Sigmoid colon (tissue), 7 donors: ENCODE measurements at regions of chr12 and their contacts with region 1.

Region 1: GRCh38 chr12:66087365-66087943 is 43.1 kb downstream of the LLPH start:
- DNase-seq: peak; percentile 71
- H3K4me3 ChIP-seq: no peak overlapping the region
- H3K27ac ChIP-seq: no peak overlapping the region
- H3K4me1 ChIP-seq: no peaks in the 10 kb centered on the region
- H3K27me3 ChIP-seq: no peaks in the 10 kb centered on the region
- CTCF ChIP-seq: peak in 3 of 4 experiments; percentile 46 to 66 (median 52)
- EP300 ChIP-seq: no peak
- POLR2A ChIP-seq: no peak

Region 2: DNA sequence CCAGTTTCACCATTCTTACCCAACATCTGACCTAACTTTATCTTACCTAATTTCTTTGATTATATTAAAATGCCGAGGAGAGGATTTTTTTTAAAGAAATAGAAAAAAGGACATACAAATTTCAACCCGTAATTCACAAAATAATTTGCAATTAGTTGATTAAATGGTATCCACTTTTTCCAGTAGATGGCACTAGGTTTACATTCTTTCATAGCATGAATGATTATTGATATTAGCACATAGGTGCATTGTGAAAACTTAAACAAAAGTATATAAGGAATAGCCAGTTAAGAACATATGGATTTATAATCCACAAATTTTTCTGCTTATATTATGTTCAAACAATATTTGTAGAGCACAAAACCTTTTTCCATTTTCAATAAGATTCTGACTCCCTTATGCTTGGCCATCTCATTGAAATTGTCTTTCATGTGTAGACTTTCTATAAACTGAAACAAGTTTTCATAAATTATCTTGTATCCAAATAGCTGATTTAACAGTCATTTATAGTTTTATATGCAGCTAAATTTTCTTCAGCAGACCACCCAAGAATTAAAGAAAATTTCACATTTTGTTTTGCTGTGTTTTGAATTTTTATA is 773.6 kb before region 1 on chr12:
- intact Hi-C with region 1: loop called (anchors 5 kb)
- DNase-seq: no peak
- H3K4me3 ChIP-seq: no peak overlapping the region
- H3K27ac ChIP-seq: no peak overlapping the region
- H3K4me1 ChIP-seq: peaks cover 0 to 25% (median 12%) of the 10 kb centered on the region in 4 donors
- H3K27me3 ChIP-seq: no peaks in the 10 kb centered on the region
- CTCF ChIP-seq: no peak
- EP300 ChIP-seq: no peak
- POLR2A ChIP-seq: no peak

Region 3: DNA sequence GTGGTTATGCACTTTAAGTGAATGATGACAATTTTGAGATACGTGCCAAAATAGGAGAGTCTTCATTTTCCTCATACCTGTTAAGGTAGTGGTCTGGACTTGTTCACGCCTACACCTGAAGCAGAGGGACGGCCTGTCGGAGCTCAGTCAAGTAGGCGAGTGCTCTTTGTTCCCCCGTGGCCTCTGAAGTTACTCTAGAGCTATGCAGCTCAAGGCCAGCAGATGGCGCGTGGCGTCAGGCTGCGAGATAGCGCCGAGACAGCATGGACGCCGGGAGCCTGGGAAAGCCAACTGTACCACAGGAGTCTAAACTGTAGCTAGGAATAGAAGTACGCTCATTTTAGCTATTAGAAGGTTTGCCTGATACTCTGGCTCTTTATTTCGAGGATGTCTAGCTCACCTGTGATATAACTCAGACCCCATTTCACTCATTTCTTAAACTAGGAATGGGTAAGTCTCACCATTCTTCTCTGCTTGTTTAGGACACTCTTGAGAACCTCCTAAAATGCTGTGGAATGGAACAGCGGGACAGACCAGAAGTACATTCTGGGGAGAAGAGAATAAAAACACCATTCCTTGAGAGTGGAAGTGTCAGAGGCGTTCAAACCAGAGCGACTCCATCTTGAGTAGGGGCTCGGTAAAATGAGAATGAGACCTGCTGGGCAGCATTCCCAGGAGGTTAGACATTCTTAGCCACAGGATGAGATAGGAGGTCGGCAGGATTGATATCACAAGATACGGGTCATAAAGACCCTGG is 530.6 kb before region 1 on chr12:
- intact Hi-C with region 1: loop called (anchors 5 kb)
- DNase-seq: peak; percentile 81
- H3K4me3 ChIP-seq: no peak overlapping the region
- H3K27ac ChIP-seq: no peak overlapping the region
- H3K4me1 ChIP-seq: no peaks in the 10 kb centered on the region
- H3K27me3 ChIP-seq: peaks cover 0 to 6% (median 0%) of the 10 kb centered on the region in 3 donors
- CTCF ChIP-seq: peak; percentile 62 to 96 (median 78)
- EP300 ChIP-seq: no peak
- POLR2A ChIP-seq: no peak